Breast epithelium (tissue), 4 donors: ENCODE measurements at regions of chr1 and their contacts with region 1.

Region 1: GRCh38 chr1:163347106-163347505 is 25.4 kb downstream of the NUF2 start:
- DNase-seq: no peak
- H3K4me3 ChIP-seq: no peak overlapping the region
- H3K27ac ChIP-seq: no peak overlapping the region
- H3K4me1 ChIP-seq: no peaks in the 10 kb centered on the region
- H3K27me3 ChIP-seq: no peaks in the 10 kb centered on the region
- CTCF ChIP-seq: no peak
- POLR2A ChIP-seq: no peak

Region 2: GRCh38 chr1:165248969-165249571 is 1902.0 kb after region 1 on chr1:
- intact Hi-C with region 1: loop called (anchors 5 kb)
- DNase-seq: no peak
- H3K4me3 ChIP-seq: no peak overlapping the region
- H3K27ac ChIP-seq: no peak overlapping the region
- H3K4me1 ChIP-seq: no peaks in the 10 kb centered on the region
- H3K27me3 ChIP-seq: no peaks in the 10 kb centered on the region
- CTCF ChIP-seq: no peak
- POLR2A ChIP-seq: no peak